ENCODE measurements at regions of chr2 and their contacts with region 1.

Region 1: GRCh38 chr2:86440631-86441391 is at the start of gene KDM3A:
- DNase-seq: peak; percentile 99 to 100
- H3K4me3 ChIP-seq: peak within 1 kb of the TSS; percentile 65 to 86
- H3K27ac ChIP-seq: peak within 1 kb of the TSS; percentile 90 to 97
- H3K4me1 ChIP-seq: peaks cover 0 to 40% (median 25%) of the 10 kb centered on the region in 4 donors
- H3K27me3 ChIP-seq: no peaks in the 10 kb centered on the region
- CTCF ChIP-seq: no peak

Region 2: DNA sequence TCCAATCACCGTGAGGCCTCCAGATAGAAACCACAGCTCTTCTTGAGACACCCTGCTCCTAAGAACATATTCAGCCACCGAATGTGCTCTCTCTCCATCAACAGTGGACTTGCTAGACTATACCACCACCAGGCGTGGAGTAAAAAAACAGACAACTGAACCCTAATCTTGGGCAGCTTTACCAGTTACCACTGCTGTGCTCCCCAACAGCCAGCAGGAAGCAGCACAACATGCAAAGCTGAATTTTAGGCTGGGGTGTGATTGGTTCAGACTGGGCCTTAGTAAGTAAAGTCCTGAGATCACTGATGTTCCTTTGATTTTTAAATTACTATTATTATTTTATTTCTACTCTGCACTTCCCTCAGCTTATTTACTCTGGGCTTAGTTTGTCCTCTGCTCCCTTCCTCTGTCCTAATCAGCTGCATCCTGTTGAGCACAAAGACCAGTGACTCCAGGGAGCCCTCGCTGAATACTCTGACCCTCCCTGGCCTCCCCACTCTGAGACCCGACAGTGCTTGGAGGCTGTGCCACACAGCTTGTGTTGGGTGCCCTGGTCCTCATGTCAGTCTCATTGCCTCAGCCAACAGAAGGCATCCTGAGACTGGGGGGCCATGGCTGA is 219.6 kb before region 1 on chr2:
- intact Hi-C with region 1: loop called (anchors 10 kb)
- DNase-seq: no peak
- H3K4me3 ChIP-seq: no peak overlapping the region
- H3K27ac ChIP-seq: peak overlapping the region; percentile 91
- H3K4me1 ChIP-seq: peaks cover 0 to 54% (median 41%) of the 10 kb centered on the region in 4 donors
- H3K27me3 ChIP-seq: no peaks in the 10 kb centered on the region
- CTCF ChIP-seq: peak; percentile 62 to 69

Region 3: DNA sequence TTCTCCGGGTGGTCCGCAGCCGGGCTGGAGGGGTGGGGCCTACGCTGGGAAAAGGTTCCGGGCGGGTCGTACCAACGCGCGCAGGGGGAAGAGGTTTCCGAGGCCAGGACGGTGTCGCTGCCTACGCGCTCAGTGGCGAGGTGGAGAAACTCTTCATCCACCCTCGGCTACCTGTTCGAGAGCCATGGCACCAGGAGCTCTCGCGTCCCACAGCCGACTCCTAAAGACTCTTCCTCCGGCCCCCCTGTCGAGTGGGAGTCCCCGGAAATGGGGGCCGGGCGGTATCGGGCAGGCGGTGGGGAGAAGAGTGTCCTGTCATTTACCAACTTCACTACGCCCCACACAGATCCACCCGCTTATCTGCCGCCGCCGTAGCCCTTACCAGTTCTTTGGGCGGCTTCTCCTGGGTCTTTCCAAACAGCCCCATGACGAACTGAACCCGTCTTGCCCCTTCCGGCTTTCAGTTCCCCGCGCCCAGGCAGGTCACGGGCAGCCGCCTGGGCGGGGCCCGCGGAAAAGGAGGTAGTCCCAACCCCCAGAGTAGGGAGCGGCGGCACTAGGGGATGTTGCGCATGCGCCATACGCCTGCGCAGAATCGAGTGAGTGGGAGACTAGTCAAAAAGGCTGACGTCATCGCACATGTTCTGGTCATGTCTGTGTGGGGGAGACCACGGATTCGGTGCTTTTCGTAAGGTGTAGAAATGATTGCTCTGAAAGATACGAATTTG is 122.3 kb after region 1 on chr2 and contains the start of gene CHMP3:
- intact Hi-C with region 1: loop called (anchors 1 kb)
- DNase-seq: peak; percentile 96 to 98
- H3K4me3 ChIP-seq: peak within 1 kb of the TSS; percentile 62 to 85
- H3K27ac ChIP-seq: peak within 1 kb of the TSS; percentile 89 to 99
- H3K4me1 ChIP-seq: peaks cover 0 to 33% (median 16%) of the 10 kb centered on the region in 4 donors
- H3K27me3 ChIP-seq: no peaks in the 10 kb centered on the region
- CTCF ChIP-seq: no peak

Region 4: GRCh38 chr2:86623651-86624541 is 183.1 kb after region 1 on chr2 and contains the start of gene RNF103:
- intact Hi-C with region 1: loop called (anchors 10 kb)
- DNase-seq: peak; percentile 97 to 98
- H3K4me3 ChIP-seq: peak within 1 kb of the TSS; percentile 71 to 88
- H3K27ac ChIP-seq: peak within 1 kb of the TSS; percentile 93
- H3K4me1 ChIP-seq: peaks cover 0 to 26% (median 15%) of the 10 kb centered on the region in 4 donors
- H3K27me3 ChIP-seq: no peaks in the 10 kb centered on the region
- CTCF ChIP-seq: no peak